GM10248 (cell line): ENCODE measurements at regions of chr20 and their contacts with region 1.

Region 1: GRCh38 chr20:34768096-34768495 is 57.4 kb downstream of the NCOA6 start:
- DNase-seq: no peak
- CTCF ChIP-seq: no peak

Region 2: GRCh38 chr20:33971147-33971975 is 796.7 kb before region 1 on chr20:
- CTCF ChIA-PET with region 1: no interaction called
- POLR2A ChIA-PET with region 1: no interaction called
- DNase-seq: no peak
- CTCF ChIP-seq: no peak

Region 3: GRCh38 chr20:34538671-34539123 is 229.4 kb before region 1 on chr20:
- CTCF ChIA-PET with region 1: interaction called, 53 read pairs
- POLR2A ChIA-PET with region 1: no interaction called
- DNase-seq: peak; percentile 71
- CTCF ChIP-seq: peak; percentile 65

Region 4: DNA sequence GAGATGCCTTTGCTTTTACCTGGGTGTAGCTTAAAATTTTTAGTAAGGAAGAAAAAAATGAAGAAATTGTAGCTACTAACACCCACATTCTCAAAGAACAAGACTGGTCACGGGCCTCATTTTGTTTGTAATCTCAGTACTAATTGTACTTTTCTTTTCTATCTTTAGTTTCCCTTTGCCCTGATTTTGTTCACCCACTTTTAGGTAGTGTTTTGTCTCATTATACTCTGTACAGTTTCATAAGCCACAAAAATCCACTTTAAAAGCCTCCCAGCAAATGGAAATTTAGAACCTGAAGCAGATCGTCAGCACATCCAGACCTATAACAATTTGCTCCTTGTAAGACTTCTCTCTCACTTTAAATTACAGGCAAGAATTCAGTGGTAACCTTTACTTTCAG is 20.6 kb before region 1 on chr20:
- CTCF ChIA-PET with region 1: interaction called, 111 read pairs
- POLR2A ChIA-PET with region 1: no interaction called
- DNase-seq: peak; percentile 26
- CTCF ChIP-seq: no peak

Region 5: DNA sequence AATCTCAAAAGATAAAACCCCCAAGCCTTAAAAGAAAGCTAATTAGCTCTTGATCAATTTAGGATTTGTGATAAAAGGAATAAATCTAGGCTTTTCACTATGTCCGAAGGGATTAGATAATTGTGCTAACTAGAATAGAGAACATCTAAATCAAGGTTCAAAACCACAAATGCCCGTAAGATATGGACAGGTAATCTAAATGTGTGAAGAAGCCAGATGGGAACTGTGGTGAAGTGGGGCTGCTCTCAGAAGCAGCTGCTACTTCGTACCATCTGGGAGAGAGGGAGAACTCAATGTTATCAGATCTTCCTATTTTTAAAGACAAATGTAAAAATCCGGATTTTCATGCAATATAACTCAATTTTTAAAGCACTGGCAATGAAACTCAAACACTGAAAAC is 13.1 kb after region 1 on chr20:
- CTCF ChIA-PET with region 1: interaction called, 42 read pairs
- POLR2A ChIA-PET with region 1: no interaction called
- DNase-seq: no peak
- CTCF ChIP-seq: no peak